ENCODE measurements at regions of chr2 and their contacts with region 1.

Region 1: DNA sequence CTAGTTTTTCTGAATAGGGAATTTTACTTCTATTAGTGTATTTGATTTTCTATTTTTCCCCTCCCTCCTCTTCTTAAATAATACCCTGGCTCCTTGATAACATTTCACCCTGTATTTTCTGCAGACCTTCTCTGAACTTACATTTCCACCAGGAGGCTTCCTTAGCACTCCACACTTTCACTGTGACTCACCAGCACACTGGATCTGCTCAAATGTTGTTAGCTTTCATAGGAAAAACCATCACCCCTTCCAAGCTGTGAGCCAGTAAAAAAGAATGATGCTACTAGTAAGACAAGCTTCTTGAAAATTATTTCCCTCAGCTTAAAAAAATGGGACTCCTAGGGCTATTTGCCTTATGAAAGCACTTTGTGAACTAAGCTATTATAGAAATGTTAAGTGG is 16.1 kb downstream of the SUPT7L start:
- DNase-seq: no peak
- H3K4me3 ChIP-seq: no peak overlapping the region
- H3K27ac ChIP-seq: no peak overlapping the region
- H3K4me1 ChIP-seq: no peaks in the 10 kb centered on the region
- H3K27me3 ChIP-seq: no peaks in the 10 kb centered on the region
- CTCF ChIP-seq: no peak
- EP300 ChIP-seq: no peak
- POLR2A ChIP-seq: no peak

Region 2: GRCh38 chr2:26422947-26423629 is 1224.2 kb before region 1 on chr2:
- intact Hi-C with region 1: loop called in 1 of 4 experiments (anchors 5 kb)
- DNase-seq: no peak
- H3K4me3 ChIP-seq: no peak overlapping the region
- H3K27ac ChIP-seq: no peak overlapping the region
- H3K4me1 ChIP-seq: no peaks in the 10 kb centered on the region
- H3K27me3 ChIP-seq: no peaks in the 10 kb centered on the region
- CTCF ChIP-seq: no peak
- EP300 ChIP-seq: no peak
- POLR2A ChIP-seq: no peak

Measured in ovary (tissue), 10 donors.